Dendritic cell treated with granulocyte-macrophage colony-stimulating factor and Interleukin-4, amounts not matched to agents 40 ng/mL and 50 ng/mL, for 4 days (primary cell): ENCODE measurements at regions of chr3 and their contacts with region 1.

Region 1: DNA sequence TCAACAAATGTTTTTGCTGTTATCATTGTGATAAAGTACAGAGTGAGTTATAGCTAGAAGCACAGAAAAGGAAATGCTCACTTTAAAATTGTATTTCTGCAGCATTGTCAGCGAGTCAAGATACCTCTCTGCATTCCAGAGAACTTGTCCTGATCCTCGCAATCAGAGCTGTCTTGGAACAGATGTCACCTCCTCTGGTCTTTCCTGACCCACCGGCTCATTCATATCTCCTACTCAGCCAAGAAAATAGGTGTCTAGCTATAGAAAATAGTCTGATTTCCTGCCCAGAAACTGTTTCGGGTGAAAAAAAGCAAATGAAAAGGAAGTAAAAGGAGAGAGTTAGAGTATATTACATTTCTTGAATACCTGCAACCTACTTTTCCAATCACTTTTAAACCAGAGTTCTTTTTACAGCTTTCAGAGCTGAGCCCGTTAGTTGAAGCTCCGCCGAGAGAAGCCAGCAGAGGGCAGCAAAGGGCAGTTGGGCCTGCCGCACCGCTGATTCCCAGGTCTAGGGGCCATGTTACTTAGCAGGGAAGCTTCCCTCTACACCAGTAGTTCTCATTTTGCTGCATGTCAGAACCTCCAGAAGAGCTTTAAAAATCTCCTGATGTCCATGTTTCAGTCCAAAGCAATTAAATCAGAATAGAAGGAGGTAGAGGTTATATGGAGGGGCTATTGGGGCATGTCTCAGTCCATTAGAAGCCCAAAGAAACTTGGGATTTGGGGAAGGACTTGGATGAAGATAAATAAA is 185.7 kb upstream of the THRB start:
- H3K4me3 Mint-ChIP-seq: no peak overlapping the region
- H3K27ac Mint-ChIP-seq: no peak overlapping the region
- H3K4me1 Mint-ChIP-seq: peaks cover 17% of the 10 kb centered on the region
- H3K27me3 Mint-ChIP-seq: peaks cover 24% of the 10 kb centered on the region

Region 2: DNA sequence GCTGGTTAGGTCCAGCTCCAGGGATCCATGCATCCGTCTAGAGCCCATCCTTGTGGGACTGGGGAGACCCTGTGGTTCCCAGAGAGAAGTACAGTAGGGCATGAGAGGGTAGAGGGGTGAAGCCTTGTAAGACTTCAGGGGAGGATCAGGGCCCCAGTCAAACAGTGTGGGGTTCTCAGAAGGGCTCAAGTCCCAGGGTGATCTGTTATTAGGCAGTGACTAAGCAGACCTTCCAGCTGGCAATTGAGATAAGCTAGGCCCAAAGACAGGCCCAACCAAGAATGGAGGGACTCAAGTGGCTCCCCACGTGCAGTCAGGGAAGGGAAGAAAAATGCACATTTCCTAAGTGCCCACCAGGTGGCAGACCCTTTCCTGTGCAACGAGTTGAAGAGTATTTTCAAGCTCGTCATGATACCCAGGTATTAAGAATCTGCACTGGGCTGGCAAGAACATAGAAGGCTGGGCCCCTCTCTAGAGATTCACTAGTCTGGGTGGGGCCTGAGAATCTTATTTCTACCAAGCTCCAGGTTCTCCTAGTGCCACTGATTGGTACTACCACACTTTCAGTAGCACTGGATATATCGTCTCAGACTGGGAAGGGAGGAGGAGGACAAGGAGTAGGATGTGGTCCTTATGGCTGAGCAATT is 494.5 kb before region 1 on chr3:
- intact Hi-C with region 1: loop called (anchors 5 kb)
- H3K4me3 Mint-ChIP-seq: no peak overlapping the region
- H3K27ac Mint-ChIP-seq: no peak overlapping the region
- H3K4me1 Mint-ChIP-seq: no peaks in the 10 kb centered on the region
- H3K27me3 Mint-ChIP-seq: no peaks in the 10 kb centered on the region

Region 3: GRCh38 chr3:24264748-24265158 is 415.6 kb before region 1 on chr3:
- intact Hi-C with region 1: loop called (anchors 2 kb)
- H3K4me3 Mint-ChIP-seq: no peak overlapping the region
- H3K27ac Mint-ChIP-seq: no peak overlapping the region
- H3K4me1 Mint-ChIP-seq: no peaks in the 10 kb centered on the region
- H3K27me3 Mint-ChIP-seq: peaks cover 4% of the 10 kb centered on the region

Region 4: DNA sequence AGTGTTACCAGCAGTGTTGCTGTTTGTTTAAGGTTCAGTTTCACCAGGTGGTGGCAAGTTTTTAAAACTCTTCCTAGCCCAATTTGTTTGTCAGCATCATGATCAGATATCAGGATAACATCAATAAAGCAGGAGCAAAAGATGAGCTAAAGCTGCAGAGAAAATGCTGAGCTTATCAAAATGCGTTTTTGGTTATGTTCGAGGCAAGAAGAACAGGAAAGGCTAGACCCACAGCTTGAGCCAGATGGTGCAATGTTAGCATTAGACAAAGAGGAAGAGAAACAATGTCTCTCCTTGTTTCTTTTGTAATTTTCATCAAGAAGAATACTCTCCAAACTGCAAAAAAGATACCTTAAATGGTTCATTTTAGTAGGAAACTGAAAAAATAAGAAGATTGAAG is 251.9 kb before region 1 on chr3:
- intact Hi-C with region 1: no loop called
- H3K4me3 Mint-ChIP-seq: no peak overlapping the region
- H3K27ac Mint-ChIP-seq: no peak overlapping the region
- H3K4me1 Mint-ChIP-seq: no peaks in the 10 kb centered on the region
- H3K27me3 Mint-ChIP-seq: no peaks in the 10 kb centered on the region

Region 5: DNA sequence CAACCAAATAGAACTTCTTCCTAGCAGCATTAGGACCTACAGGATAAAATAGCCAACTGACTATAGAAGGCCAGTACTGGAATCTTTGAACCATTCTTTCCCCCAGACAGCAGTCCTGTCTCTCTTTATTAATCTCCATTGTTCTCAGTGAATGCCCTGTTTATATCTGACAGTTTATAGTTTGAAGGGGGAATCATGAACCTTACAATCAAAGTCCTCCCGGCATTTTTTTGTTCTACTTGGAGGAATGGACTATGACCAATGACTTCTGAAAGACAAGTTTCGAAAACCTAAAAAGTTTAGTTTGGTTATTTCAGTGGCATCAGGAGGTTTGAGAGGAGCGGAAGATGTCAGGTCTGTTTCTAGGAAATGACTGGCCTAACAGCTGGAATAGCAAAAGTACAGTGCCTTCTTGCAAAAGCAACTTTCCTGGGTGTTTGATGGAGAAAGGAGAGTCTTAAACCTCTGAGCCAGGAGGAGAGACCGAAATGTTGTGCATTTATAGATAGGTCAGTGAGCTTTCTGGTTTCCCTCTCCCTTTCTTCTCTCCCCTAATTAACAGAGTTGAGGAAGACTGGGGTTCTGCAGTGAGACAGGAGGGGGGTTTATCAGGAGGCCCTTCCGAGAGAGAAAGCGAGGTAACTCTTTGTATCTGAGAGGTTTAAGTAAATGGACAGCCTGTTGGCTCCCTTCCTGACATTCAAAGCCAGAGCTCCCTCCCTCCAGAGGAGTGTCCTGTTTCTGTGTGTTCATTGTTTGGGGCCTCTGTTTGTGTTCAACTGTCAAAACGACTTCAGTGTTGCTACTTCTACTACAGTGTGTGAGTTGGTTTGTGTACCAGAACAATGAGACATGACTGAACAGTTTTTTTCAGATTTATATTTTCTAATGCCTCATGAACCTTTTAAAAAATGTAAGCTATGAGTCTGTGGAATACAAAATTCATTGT is 364.6 kb after region 1 on chr3:
- intact Hi-C with region 1: no loop called
- H3K4me3 Mint-ChIP-seq: no peak overlapping the region
- H3K27ac Mint-ChIP-seq: no peak overlapping the region
- H3K4me1 Mint-ChIP-seq: no peaks in the 10 kb centered on the region
- H3K27me3 Mint-ChIP-seq: no peaks in the 10 kb centered on the region

Region 6: DNA sequence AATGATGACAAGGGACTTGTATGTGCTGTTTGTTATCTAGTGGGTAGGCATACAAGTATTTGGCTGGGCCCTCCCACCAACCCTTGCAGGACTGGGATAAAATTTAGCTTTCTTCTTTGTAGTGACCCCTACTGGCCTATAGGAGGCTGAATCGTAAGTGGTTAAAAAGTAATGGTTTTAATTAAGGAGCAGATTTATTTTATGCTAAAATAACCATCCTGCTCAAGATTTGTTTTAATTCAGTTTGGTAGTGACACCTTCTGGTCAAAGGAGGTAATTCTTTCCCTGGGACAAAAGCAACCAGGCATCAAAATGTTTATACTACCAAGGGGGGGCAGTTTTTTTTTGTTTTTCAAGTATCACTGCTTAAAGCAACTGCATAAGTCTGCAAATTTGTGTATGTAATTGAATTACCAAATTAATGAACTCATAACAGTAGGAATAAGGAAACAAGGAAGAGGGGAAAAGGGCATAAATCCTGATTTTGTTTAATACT is 913.7 kb after region 1 on chr3:
- intact Hi-C with region 1: loop called (anchors 10 kb)
- H3K4me3 Mint-ChIP-seq: no peak overlapping the region
- H3K27ac Mint-ChIP-seq: no peak overlapping the region
- H3K4me1 Mint-ChIP-seq: peaks cover 7% of the 10 kb centered on the region
- H3K27me3 Mint-ChIP-seq: no peaks in the 10 kb centered on the region